Posterior cingulate gyrus (tissue), 11 donors: ENCODE measurements at regions of chr14 and their contacts with region 1.

Region 1: DNA sequence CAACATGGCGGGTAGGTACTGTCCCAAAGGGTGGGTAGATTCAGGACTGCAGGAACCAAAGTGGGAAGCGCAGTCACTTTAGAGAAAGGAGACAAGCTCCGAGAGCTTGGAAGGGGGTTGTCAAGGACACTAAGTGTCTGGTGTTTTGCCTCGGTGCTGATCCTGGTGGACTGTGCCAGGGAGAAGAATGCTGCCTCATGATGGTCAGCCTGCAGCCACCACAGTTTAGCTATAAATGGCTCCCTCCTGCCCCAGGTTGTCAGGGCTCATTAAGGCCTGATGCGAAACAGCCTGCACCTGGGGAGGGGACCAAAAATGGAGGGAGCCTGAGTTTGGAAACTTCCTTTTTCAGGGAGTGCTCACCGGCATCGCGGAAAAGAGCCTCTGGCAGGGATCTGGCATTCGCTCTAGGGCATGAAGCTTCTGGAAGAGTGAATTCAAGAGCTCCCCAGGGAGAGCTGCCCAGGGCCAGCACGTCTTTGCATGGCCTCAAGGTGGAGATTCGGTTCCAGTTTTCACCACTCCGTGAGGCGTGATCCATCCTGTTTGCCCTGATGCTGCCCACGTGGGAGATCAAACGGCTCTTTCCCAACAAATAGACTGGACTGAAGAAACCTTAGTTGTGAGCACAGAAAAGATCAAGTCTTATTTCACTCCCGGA is 164.0 kb downstream of the FOXN3 start:
- DNase-seq: peak in 2 of 10 donors; percentile 67 to 81

Region 2: DNA sequence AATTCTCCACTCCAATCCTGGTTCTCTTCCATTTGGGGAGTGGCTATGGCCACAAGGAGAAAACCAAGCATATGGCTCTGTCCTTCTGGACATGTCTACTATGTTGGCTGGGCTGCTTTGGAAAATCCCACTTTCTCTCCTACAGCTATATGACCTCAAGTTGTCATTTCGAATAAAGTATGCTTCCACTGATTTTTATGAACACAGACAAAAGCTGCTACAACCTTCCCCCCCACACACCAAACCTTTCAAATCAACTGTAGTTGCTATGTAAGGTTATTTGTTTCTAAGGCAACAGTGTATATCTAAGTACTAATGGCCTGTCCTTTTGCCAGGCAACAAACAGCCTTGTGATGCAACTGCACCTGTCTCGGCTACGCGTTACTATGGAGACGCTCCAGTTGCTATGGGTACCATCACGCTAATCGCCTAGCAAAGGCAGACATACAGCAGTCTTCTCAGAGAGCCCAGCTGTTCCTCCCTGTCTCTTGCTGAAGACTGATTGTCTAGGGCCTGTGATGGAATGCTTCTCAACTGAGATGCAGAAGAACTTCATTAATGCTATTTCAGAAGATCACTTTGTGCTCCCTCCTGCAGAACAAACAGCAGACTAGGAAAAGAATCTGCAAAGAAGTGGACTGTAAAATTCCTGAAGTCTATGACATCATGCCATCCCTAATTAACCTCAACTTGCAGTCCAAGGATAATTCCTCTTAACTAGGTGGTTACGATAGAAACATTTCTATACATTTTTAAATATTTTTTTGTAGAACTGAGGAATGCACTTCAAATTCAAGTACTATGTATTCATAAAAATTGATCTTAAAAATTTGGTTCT is 96.4 kb after region 1 on chr14:
- intact Hi-C with region 1: loop called (anchors 10 kb)
- DNase-seq: peak; percentile 34 to 97 (median 82)